ENCODE measurements at regions of chr4 and their contacts with region 1.

Region 1: GRCh38 chr4:6986781-6987587 is 56.2 kb upstream of the TADA2B start:
- DNase-seq: peak; percentile 97
- ATAC-seq: peak; percentile 96

Region 2: DNA sequence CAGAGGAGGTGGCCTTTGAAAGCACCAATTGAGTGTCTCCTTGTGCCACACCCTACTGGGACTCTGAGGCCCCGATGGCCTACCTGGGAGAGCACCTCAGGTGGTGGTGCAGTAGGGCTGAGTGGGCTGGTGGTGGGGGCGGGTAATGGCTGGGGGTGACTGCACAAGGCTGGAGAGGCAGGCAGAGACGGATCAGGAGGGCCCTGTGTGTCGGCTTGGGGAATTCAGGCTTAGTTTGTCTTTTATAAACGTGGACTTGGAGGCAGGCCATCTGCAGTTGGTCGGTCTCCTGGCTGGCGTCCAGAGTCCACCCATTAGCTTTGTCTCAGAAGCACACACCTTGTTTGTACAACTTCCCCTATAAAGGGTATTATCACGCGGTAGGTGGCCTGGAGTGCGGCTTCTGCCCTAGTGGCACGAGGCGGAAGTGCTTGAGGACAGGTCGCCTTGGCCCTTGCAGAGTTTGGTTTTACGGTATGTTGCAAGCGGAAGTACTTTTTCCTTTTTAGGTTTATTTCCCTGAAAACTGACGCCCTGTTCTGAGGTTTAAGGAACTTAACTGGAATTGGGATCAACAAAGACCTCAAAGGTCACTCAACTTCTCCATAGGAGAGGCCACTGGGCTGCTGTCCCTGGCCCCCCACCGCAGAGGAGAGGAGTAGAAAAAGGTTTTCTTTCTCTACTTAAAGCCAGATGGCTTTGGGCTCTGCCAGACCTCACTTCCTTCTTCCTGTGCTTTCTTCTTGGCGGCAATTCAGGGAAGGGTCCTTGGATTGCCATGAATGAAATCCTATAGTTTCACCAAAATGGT is 69.3 kb before region 1 on chr4:
- intact Hi-C with region 1: loop called (anchors 10 kb)
- DNase-seq: peak; percentile 85
- ATAC-seq: peak; percentile 71

Region 3: DNA sequence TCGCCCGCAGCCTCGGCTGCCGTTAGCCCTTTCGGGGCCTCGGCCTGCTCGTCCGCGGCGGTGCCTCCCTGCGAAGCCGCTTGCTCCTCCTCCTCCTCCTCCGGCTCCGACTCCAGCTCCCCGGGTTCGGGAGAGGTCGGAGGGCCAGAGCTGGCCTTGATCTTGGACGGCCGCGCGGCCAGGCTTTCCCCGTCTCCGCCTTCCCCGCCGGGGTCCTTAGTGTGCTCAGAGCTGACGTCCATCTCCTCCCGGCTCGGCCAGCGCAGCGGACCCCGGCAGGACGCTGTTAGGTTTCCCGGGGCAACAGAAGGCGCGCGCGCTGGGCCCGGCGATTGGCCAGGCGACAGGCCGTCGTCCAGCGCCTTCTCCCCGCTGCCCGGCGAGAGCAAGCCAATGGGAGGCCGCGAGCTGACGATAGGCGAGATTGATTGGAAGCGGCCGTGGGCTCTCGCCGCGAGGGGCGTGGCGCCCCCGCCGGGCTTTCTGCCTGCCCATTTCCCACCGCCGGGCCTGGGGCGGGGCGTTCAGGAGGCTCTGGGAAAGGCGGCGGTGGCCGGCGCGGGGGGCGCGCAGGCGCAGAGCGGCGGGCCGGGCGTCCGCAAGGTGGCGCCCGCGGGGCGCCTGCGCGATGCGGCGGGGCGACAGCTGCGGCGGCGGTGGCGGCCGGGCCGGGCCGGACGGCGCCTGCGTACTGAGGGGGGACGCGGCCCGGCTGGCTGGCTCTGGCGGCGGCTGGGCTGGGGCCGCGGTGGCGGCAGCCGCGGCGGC is 55.9 kb after region 1 on chr4 and contains the start of gene TADA2B:
- intact Hi-C with region 1: loop called (anchors 2 kb)
- DNase-seq: peak; percentile 98
- ATAC-seq: peak; percentile 95
- total RNA-seq, gene TADA2B: 35.5 TPM

Measured in Right ventricle myocardium superior (tissue), 1 donor.